ENCODE measurements at regions of chr1 and their contacts with region 1.

Region 1: DNA sequence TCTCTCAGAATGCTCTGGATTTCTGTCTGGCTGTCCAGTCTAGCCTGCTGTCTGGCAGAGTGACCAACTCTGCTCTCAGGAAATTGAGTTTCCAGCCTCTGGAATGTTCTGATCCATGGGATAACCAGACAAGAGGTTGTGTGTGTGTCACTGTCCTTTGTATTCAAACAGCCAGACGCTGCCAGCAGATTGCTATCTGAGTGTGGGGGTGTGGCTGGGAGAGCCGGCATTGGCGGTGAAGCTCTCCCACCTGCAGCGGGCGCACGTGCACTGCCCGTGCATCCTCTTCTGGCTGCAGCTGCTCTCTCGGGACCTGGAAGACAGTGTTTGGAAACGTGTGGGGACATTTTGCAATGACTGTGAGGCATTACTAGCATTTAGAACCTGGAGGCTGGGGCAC is 26.1 kb downstream of the PKP1 start:
- DNase-seq: peak; percentile 85
- H3K4me3 Mint-ChIP-seq: no peak overlapping the region
- H3K27ac Mint-ChIP-seq: peak overlapping the region; percentile 68
- H3K4me1 Mint-ChIP-seq: peaks cover 36% of the 10 kb centered on the region
- H3K27me3 Mint-ChIP-seq: no peaks in the 10 kb centered on the region
- CTCF ChIP-seq: no peak

Region 2: GRCh38 chr1:201268604-201269151 is 40.7 kb before region 1 on chr1:
- CTCF ChIA-PET with region 1: interaction called, 4 read pairs
- intact Hi-C with region 1: loop called (anchors 5 kb)
- DNase-seq: peak; percentile 48
- H3K4me3 Mint-ChIP-seq: no peak overlapping the region
- H3K27ac Mint-ChIP-seq: peak overlapping the region; percentile 40
- H3K4me1 Mint-ChIP-seq: peaks cover 42% of the 10 kb centered on the region
- H3K27me3 Mint-ChIP-seq: no peaks in the 10 kb centered on the region
- CTCF ChIP-seq: no peak

Region 3: DNA sequence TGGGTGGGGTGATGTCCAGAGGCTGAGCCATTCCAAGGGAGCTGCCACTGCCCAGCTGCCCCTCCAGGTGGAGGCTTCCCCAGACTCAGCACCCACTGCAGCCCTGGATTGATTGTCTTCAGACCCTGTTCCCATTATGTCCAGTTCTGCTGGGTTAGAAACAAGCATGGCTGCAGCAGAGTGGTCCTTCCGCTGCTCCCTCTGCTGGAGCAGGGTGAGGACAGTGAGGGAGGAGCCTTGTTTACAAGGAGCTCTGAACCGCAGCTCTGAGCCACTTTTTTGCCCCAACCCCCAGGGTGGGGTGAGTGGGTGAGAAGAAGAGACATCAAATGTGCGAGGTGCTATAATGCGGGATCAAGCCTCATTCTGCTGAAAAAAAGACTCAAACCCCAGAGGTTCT is 65.7 kb after region 1 on chr1:
- CTCF ChIA-PET with region 1: no interaction called
- intact Hi-C with region 1: no loop called
- DNase-seq: no peak
- H3K4me3 Mint-ChIP-seq: no peak overlapping the region
- H3K27ac Mint-ChIP-seq: no peak overlapping the region
- H3K4me1 Mint-ChIP-seq: no peaks in the 10 kb centered on the region
- H3K27me3 Mint-ChIP-seq: peaks cover 94% of the 10 kb centered on the region
- CTCF ChIP-seq: peak; percentile 15

Region 4: DNA sequence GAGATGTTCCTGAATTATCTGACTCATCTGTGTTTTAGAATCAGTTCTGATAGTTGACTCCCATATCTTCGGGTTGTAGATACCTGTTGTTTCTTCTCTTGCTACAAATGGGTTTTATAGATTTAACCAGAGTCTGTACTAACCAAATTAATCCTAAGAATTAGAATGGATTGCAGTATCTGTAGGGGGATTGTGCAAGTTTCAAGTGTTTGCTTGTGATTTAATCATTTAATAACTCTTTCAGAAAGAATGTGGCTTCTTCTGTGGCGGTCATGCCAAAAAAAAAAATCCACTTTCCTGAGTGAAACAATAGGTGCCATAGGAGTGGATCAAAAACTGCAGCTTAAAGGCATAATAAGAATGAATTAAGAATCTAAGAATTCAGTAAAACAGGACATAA is 529.0 kb after region 1 on chr1:
- CTCF ChIA-PET with region 1: no interaction called
- intact Hi-C with region 1: no loop called
- DNase-seq: no peak
- H3K4me3 Mint-ChIP-seq: no peak overlapping the region
- H3K27ac Mint-ChIP-seq: no peak overlapping the region
- H3K4me1 Mint-ChIP-seq: peaks cover 19% of the 10 kb centered on the region
- H3K27me3 Mint-ChIP-seq: no peaks in the 10 kb centered on the region
- CTCF ChIP-seq: no peak

Measured in Calu3 (cell line).